Activated naive CD4-positive, alpha-beta T cell treated with anti-CD3 and anti-CD28 coated beads for 36 hours (primary cell): ENCODE measurements at regions of chr11 and their contacts with region 1.

Region 1: DNA sequence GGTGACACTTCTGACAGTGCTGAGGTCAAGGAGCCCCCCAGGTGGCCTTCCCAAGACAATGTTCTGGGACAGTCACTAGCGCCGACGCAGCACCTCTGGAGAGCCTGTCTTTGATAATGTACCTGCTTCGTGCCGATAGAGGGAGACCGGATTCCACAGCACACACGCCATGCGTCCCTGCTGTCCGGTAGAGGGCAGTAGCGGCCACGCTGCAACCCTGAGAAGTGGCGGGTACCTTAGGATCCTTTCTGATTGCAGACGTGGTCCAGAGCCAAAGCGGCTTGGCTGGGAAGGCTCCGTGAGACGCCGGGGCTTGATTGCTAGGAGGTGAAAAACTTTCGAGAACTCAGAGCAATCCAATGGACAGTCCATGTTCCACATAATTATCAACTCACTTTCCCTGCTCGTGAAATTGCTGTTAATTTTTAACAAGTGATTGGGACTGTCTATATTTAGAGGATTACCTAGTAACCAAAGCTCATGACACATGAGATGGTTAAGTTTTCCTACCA is 11.4 kb upstream of the BARX2 start:
- DNase-seq: peak; percentile 90
- H3K4me3 Mint-ChIP-seq: no peak overlapping the region
- H3K27ac Mint-ChIP-seq: no peak overlapping the region
- H3K4me1 Mint-ChIP-seq: no peaks in the 10 kb centered on the region
- H3K27me3 Mint-ChIP-seq: peaks cover 43% of the 10 kb centered on the region

Region 2: GRCh38 chr11:129117595-129118350 is 246.4 kb before region 1 on chr11:
- CTCF ChIA-PET with region 1: interaction called, 3 read pairs
- intact Hi-C with region 1: loop called (anchors 1 kb)
- DNase-seq: peak; percentile 64
- H3K4me3 Mint-ChIP-seq: no peak overlapping the region
- H3K27ac Mint-ChIP-seq: no peak overlapping the region
- H3K4me1 Mint-ChIP-seq: peaks cover 3% of the 10 kb centered on the region
- H3K27me3 Mint-ChIP-seq: no peaks in the 10 kb centered on the region

Region 3: GRCh38 chr11:129375751-129376657 is 11.8 kb after region 1 on chr11 and contains the start of gene BARX2:
- CTCF ChIA-PET with region 1: interaction called, 10 read pairs
- intact Hi-C with region 1: loop called (anchors 1 kb)
- DNase-seq: peak; percentile 77
- H3K4me3 Mint-ChIP-seq: peak within 1 kb of the TSS; percentile 71
- H3K27ac Mint-ChIP-seq: no peak within 1 kb of the TSS
- H3K4me1 Mint-ChIP-seq: peaks cover 24% of the 10 kb centered on the region
- H3K27me3 Mint-ChIP-seq: peaks cover 70% of the 10 kb centered on the region
- total RNA-seq, gene BARX2: 3.2 to 3.8 TPM

Region 4: DNA sequence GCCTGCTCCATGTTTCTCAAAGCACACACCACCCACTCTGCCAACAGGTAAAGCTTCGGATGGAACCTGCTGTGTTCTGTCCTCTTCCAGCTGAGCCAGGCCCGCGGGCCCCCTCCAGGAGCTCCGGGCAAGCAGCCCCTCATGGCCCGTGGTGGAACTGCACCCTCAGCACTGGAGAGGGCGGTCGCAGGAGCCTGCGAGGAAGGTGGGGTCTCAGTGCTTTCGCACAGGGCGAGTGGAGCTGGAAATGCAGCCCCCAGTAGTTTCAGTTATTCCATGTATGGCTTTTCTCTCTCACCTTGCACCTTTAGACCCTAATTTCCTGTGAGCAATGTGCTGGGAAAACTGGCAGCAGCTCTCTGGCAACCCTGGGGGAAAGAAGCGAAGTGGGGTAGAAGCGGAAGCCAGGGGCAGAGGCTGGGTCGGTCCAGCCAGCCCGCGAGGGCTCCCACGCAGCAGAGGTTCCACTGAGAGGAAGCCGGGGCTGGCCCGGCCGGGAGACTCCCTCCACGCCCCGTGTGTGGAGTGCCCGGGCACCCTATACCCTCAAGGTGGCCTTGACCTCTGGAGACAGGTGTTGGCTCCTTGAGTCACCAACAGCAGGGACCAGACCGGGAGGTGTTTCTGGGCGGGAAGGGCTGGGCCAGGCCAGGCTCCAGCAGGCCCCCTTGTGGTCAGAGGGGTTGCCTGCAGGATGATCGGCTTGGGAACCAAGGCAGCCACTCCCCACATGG is 331.5 kb after region 1 on chr11:
- CTCF ChIA-PET with region 1: interaction called, 16 read pairs
- intact Hi-C with region 1: loop called (anchors 1 kb)
- DNase-seq: peak; percentile 80
- H3K4me3 Mint-ChIP-seq: peak overlapping the region; percentile 71
- H3K27ac Mint-ChIP-seq: peak overlapping the region; percentile 44
- H3K4me1 Mint-ChIP-seq: peaks cover 12% of the 10 kb centered on the region
- H3K27me3 Mint-ChIP-seq: no peaks in the 10 kb centered on the region

Region 5: DNA sequence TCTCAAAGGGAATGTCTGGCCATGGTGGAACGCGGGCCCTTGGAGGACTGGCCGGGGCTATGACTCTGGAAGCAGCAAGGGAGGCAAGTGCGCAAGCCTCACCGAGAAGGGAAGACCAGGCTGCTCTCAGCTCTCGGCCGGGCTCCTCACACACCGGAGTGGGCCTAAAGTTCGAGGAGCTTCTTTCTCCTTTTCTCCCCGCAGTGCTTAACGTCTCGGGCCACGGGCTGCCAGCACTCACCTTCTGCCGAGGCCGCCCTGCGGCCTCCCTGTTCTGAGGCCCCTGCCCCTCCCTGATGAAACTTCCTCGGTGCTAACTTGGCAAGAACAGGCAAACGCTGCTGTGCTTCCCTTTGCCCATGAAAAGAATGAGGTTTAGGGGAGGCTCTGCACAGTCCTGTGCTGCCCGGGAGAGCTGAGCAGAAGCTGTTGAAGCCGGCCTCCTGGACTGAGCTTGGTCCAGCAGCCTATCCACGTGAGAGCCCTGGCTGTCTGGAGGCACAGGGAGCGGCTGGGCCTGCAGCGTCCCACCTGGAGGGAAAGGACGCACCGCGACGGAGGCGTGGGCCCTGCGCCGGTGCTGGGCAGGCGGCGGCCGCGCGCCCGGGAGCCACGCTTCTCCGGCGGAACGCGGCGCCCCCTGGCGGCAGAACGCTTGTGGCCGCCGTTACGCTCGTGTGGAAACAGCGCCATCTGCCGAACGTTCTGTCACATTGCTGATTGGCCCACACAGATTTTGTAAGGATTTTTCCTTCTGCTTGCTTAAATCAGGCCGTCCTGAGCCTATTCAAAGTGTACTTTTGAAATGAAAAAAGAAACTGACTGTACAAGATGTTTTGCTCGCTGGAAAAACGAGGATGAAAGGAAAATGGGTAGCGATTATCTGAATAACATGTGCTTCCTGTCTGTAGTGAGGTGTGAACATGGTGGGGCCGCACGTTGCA is 386.4 kb after region 1 on chr11:
- CTCF ChIA-PET with region 1: interaction called, 39 read pairs
- intact Hi-C with region 1: loop called (anchors 1 kb)
- DNase-seq: peak; percentile 82
- H3K4me3 Mint-ChIP-seq: peak overlapping the region; percentile 23
- H3K27ac Mint-ChIP-seq: no peak overlapping the region
- H3K4me1 Mint-ChIP-seq: peaks cover 2% of the 10 kb centered on the region
- H3K27me3 Mint-ChIP-seq: no peaks in the 10 kb centered on the region

Region 6: DNA sequence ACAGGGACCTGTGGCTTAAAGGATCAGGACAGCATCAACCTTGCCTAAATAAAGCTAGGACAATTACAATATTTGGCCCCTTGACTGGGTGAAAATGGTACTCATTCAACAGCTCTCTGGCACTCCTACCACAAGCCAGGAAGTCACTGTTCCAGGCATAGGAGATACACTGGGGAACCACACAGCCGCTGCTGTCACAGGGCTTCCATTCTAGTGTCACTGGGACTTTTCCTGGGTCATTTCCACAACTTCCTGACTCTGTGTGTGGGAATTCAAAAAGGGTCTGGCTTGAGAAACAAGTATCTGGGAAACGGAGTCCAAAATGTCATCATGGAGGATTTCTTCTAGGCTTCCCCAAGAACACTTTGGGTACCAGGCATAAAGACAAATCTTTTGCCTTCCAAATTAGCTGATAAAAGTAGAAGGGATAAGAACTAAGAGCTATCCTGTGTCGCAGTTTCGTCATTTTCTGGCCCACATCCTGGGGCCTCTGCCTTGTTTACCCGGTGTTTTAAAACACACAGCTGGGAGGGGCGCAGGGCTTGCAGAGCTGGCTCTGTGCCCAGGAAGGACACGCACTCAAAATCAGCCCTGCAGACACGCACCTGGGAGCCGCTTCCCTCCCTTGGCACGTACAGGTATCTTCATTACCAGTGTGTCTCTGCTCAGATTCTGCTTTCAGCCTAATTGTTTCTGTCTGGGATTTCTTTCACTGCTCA is 489.5 kb after region 1 on chr11:
- CTCF ChIA-PET with region 1: no interaction called
- intact Hi-C with region 1: loop called (anchors 5 kb)
- DNase-seq: peak; percentile 84
- H3K4me3 Mint-ChIP-seq: no peak overlapping the region
- H3K27ac Mint-ChIP-seq: peak overlapping the region; percentile 86
- H3K4me1 Mint-ChIP-seq: peaks cover 38% of the 10 kb centered on the region
- H3K27me3 Mint-ChIP-seq: no peaks in the 10 kb centered on the region